Caco-2 (cell line): ENCODE measurements at regions of chr7 and their contacts with region 1.

Region 1: GRCh38 chr7:43582503-43583423 is at the start of gene STK17A:
- DNase-seq: peak; percentile 92 to 96
- H3K4me3 ChIP-seq: peak within 1 kb of the TSS; percentile 64
- H3K4me3 Mint-ChIP-seq: peak within 1 kb of the TSS; percentile 89
- H3K27ac Mint-ChIP-seq: peak within 1 kb of the TSS; percentile 72
- H3K4me1 ChIP-seq: peaks cover 28% of the 10 kb centered on the region
- H3K4me1 Mint-ChIP-seq: peaks cover 10% of the 10 kb centered on the region
- H3K27me3 ChIP-seq: no peaks in the 10 kb centered on the region
- H3K27me3 Mint-ChIP-seq: no peaks in the 10 kb centered on the region
- CTCF ChIP-seq: peak; percentile 96 to 99
- total RNA-seq, gene STK17A: 19.2 and 19.6 TPM in 2 replicates

Region 2: GRCh38 chr7:43394441-43395130 is 188.2 kb before region 1 on chr7:
- CTCF ChIA-PET with region 1: no interaction called
- POLR2A ChIA-PET with region 1: no interaction called
- intact Hi-C with region 1: no loop called
- DNase-seq: no peak
- H3K4me3 ChIP-seq: no peak overlapping the region
- H3K4me3 Mint-ChIP-seq: no peak overlapping the region
- H3K27ac Mint-ChIP-seq: no peak overlapping the region
- H3K4me1 ChIP-seq: peaks cover 12% of the 10 kb centered on the region
- H3K4me1 Mint-ChIP-seq: no peaks in the 10 kb centered on the region
- H3K27me3 ChIP-seq: no peaks in the 10 kb centered on the region
- H3K27me3 Mint-ChIP-seq: no peaks in the 10 kb centered on the region
- CTCF ChIP-seq: no peak

Region 3: DNA sequence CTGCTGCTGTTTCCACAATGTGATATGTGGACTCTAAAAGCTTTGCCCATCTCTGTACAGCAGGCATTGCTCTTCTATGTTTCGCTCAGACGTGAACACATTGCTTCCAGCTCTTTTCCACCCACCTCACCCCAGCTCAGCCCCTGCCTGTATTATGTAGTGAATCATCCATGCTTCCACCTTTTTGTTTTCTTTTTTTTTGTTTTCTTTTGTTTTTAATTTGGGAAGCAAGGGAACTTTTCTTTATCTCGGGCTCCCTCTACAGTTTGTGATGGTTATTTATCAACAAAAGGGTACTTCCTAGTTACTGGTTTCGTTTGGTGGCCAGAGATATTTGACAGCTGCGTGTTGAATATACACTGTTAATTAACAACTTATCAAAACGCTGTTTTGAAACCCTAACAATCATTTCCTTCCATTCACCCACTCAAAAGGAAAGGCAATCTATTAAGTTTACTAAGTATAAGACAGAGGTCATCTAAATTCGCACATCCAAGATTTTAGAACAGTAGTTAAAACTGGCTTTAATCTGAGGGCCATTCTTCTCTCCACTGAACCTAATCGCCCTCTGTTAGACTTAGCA is 127.7 kb before region 1 on chr7:
- CTCF ChIA-PET with region 1: interaction called, 16 read pairs
- POLR2A ChIA-PET with region 1: interaction called, 3 read pairs
- intact Hi-C with region 1: no loop called
- DNase-seq: peak in 1 of 2 experiments; percentile 28
- H3K4me3 ChIP-seq: no peak overlapping the region
- H3K4me3 Mint-ChIP-seq: no peak overlapping the region
- H3K27ac Mint-ChIP-seq: no peak overlapping the region
- H3K4me1 ChIP-seq: peaks cover 13% of the 10 kb centered on the region; the same call in 1 of the 2 replicates
- H3K4me1 Mint-ChIP-seq: peaks cover 21% of the 10 kb centered on the region
- H3K27me3 ChIP-seq: no peaks in the 10 kb centered on the region
- H3K27me3 Mint-ChIP-seq: no peaks in the 10 kb centered on the region
- CTCF ChIP-seq: peak; percentile 45 to 50

Region 4: GRCh38 chr7:43537765-43538403 is 44.9 kb before region 1 on chr7:
- CTCF ChIA-PET with region 1: interaction called, 12 read pairs
- POLR2A ChIA-PET with region 1: interaction called, 5 read pairs
- intact Hi-C with region 1: no loop called
- DNase-seq: peak; percentile 20 to 66
- H3K4me3 ChIP-seq: no peak overlapping the region
- H3K4me3 Mint-ChIP-seq: no peak overlapping the region
- H3K27ac Mint-ChIP-seq: peak overlapping the region; percentile 36
- H3K4me1 ChIP-seq: peaks cover 28% of the 10 kb centered on the region
- H3K4me1 Mint-ChIP-seq: peaks cover 19% of the 10 kb centered on the region
- H3K27me3 ChIP-seq: no peaks in the 10 kb centered on the region
- H3K27me3 Mint-ChIP-seq: no peaks in the 10 kb centered on the region
- CTCF ChIP-seq: no peak

Region 5: DNA sequence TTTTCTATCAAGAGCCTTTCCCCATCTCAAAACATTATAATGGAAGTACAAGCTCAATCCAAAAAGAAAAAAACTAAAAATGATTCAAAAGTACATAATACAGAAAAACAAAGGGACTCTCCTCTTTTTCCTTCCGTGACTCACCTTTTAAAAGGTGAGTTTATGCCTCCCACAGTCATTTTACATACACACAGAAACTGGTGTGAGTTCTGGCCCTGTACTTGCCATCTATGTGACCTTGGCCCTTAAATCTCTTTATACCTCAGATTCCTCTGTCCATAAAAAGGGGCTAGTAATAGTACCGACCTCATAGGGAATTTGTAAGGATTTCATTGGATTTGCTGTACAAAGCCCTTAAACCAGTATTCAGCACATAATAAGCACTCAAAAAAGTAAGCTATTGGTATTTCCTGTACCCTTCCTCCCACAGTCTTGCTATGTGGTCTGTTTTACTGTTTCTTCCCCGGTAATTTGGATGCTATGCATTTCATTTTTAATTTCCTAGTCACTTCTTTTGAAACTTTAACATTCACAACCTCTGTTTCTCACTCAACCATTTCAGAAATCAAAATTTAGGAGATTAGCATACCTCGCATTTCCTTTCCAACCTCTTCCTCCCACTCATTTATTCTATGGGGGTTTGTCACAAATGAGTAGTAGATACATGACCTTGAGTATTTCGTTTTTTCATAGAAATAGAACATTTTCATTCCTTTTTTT is 39.1 kb after region 1 on chr7:
- CTCF ChIA-PET with region 1: interaction called, 14 read pairs
- POLR2A ChIA-PET with region 1: interaction called, 3 read pairs
- intact Hi-C with region 1: loop called (anchors 5 kb)
- DNase-seq: no peak
- H3K4me3 ChIP-seq: no peak overlapping the region
- H3K4me3 Mint-ChIP-seq: no peak overlapping the region
- H3K27ac Mint-ChIP-seq: no peak overlapping the region
- H3K4me1 ChIP-seq: no peaks in the 10 kb centered on the region
- H3K4me1 Mint-ChIP-seq: no peaks in the 10 kb centered on the region
- H3K27me3 ChIP-seq: no peaks in the 10 kb centered on the region
- H3K27me3 Mint-ChIP-seq: no peaks in the 10 kb centered on the region
- CTCF ChIP-seq: no peak

Region 6: GRCh38 chr7:43700059-43700501 is 117.3 kb after region 1 on chr7:
- CTCF ChIA-PET with region 1: interaction called, 129 read pairs
- POLR2A ChIA-PET with region 1: interaction called, 28 read pairs
- intact Hi-C with region 1: loop called (anchors 1 kb)
- DNase-seq: peak in 1 of 2 experiments; percentile 26
- H3K4me3 ChIP-seq: no peak overlapping the region
- H3K4me3 Mint-ChIP-seq: no peak overlapping the region
- H3K27ac Mint-ChIP-seq: no peak overlapping the region
- H3K4me1 ChIP-seq: 0 out of 2 replicates have a peak, but pooled peaks cover under 1% of the 10 kb centered on the region
- H3K4me1 Mint-ChIP-seq: no peaks in the 10 kb centered on the region
- H3K27me3 ChIP-seq: no peaks in the 10 kb centered on the region
- H3K27me3 Mint-ChIP-seq: no peaks in the 10 kb centered on the region
- CTCF ChIP-seq: peak; percentile 56 to 57

Region 7: GRCh38 chr7:43834463-43835251 is 251.9 kb after region 1 on chr7:
- CTCF ChIA-PET with region 1: interaction called, 27 read pairs
- POLR2A ChIA-PET with region 1: interaction called, 3 read pairs
- intact Hi-C with region 1: loop called (anchors 2 kb)
- DNase-seq: no peak
- H3K4me3 ChIP-seq: no peak overlapping the region
- H3K4me3 Mint-ChIP-seq: no peak overlapping the region
- H3K27ac Mint-ChIP-seq: no peak overlapping the region
- H3K4me1 ChIP-seq: 0 out of 2 replicates have a peak, but pooled peaks cover 3% of the 10 kb centered on the region
- H3K4me1 Mint-ChIP-seq: no peaks in the 10 kb centered on the region
- H3K27me3 ChIP-seq: no peaks in the 10 kb centered on the region
- H3K27me3 Mint-ChIP-seq: no peaks in the 10 kb centered on the region
- CTCF ChIP-seq: no peak

Region 8: DNA sequence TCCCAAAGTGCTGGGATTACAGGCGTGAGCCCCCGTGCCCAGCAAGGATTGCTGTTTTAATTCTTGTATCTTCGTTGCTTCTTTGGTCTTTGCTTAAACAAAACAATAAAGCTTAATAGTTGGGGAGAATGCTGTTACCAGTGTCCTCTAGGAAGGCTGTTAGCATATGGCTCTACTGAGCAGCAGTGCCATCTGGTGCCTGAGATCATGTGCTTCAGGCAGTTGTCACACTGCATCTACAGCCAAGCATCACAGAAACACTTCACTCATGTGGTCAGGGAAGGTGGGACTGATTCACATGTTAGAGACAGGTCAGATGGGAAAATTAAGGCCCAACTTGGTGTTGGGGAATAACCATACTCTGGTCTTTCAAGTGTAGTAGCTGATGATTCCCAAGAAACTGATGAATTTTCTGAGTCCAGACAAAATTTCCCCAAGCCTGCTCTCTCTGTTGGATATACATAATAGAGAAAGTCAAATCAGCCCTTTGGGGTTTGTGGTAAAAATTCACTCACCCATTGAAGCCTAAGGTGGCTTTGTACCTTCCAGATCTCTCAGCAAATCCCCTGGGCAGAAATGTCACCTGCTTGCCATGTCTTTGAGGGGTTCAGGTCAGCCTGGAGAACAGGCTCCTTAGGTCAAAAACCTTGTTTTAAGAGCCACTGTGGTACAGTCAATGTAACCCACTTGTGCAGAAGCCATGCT is 371.9 kb after region 1 on chr7:
- CTCF ChIA-PET with region 1: interaction called, 10 read pairs
- POLR2A ChIA-PET with region 1: no interaction called
- intact Hi-C with region 1: no loop called
- DNase-seq: peak; percentile 56 to 66
- H3K4me3 ChIP-seq: no peak overlapping the region
- H3K4me3 Mint-ChIP-seq: no peak overlapping the region
- H3K27ac Mint-ChIP-seq: no peak overlapping the region
- H3K4me1 ChIP-seq: no peaks in the 10 kb centered on the region
- H3K4me1 Mint-ChIP-seq: no peaks in the 10 kb centered on the region
- H3K27me3 ChIP-seq: no peaks in the 10 kb centered on the region
- H3K27me3 Mint-ChIP-seq: no peaks in the 10 kb centered on the region
- CTCF ChIP-seq: peak; percentile 51 to 74